Endothelial cell of umbilical vein (primary cell): ENCODE measurements at regions of chr18 and their contacts with region 1.

Region 1: GRCh38 chr18:812376-813171 is 532 bp upstream of the YES1 start:
- DNase-seq: peak; percentile 88
- H3K4me3 ChIP-seq: peak overlapping the region; percentile 80 to 100 (median 99)
- H3K27ac ChIP-seq: peak overlapping the region; percentile 90
- H3K4me1 ChIP-seq: peaks cover 49% of the 10 kb centered on the region
- H3K27me3 ChIP-seq: no peaks in the 10 kb centered on the region
- CTCF ChIP-seq: no peak
- POLR2A ChIP-seq: no peak

Region 2: GRCh38 chr18:731185-731584 is 81.4 kb before region 1 on chr18:
- CTCF ChIA-PET with region 1: no interaction called
- POLR2A ChIA-PET with region 1: interaction called, 11 read pairs
- dilution Hi-C with region 1: no loop called
- intact Hi-C with region 1: no loop called
- DNase-seq: no peak
- H3K4me3 ChIP-seq: no peak overlapping the region
- H3K27ac ChIP-seq: no peak overlapping the region
- H3K4me1 ChIP-seq: no peaks in the 10 kb centered on the region
- H3K27me3 ChIP-seq: no peaks in the 10 kb centered on the region
- CTCF ChIP-seq: no peak
- POLR2A ChIP-seq: no peak

Region 3: DNA sequence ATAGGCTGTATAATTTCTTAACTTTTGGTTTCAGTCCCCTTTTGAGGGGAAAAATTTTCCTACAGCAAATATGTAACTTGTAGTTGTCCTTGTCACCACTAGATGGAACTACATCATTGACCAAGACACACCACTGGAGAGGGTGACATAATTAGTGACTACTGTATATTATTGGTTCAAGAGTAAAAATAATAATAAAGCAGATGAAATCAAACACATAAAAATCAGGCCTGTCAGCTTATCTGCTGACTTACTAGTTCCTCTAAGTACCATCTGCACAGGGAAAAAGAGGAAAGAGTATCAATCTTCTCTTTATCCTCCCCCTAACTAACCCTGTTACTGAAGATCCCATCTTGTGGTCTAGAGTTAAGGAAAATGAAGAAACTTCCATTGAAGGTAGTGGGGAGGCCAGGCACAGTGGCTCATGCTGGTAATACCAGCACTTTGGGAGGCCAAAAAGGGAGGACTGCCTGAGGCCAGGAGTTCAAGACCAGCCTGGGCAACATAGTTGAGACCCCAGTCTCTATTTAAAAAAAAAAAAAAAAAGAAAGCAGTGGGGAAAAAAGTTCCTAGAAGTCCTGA is 70.6 kb before region 1 on chr18:
- CTCF ChIA-PET with region 1: interaction called, 13 read pairs
- POLR2A ChIA-PET with region 1: no interaction called
- dilution Hi-C with region 1: no loop called
- intact Hi-C with region 1: loop called (anchors 1 kb)
- DNase-seq: peak; percentile 78
- H3K4me3 ChIP-seq: no peak overlapping the region
- H3K27ac ChIP-seq: peak overlapping the region; percentile 9
- H3K4me1 ChIP-seq: peaks cover 19% of the 10 kb centered on the region
- H3K27me3 ChIP-seq: no peaks in the 10 kb centered on the region
- CTCF ChIP-seq: peak; percentile 46 to 51
- POLR2A ChIP-seq: no peak

Region 4: GRCh38 chr18:778194-778927 is 34.2 kb before region 1 on chr18:
- CTCF ChIA-PET with region 1: interaction called, 6 read pairs
- POLR2A ChIA-PET with region 1: no interaction called
- dilution Hi-C with region 1: no loop called
- intact Hi-C with region 1: loop called (anchors 2 kb)
- DNase-seq: peak; percentile 76
- H3K4me3 ChIP-seq: peak overlapping the region in 1 of 3 experiments; percentile 13
- H3K27ac ChIP-seq: peak overlapping the region; percentile 10
- H3K4me1 ChIP-seq: peaks cover 41% of the 10 kb centered on the region
- H3K27me3 ChIP-seq: no peaks in the 10 kb centered on the region
- CTCF ChIP-seq: no peak
- POLR2A ChIP-seq: no peak

Region 5: GRCh38 chr18:824179-824578 is 11.6 kb after region 1 on chr18:
- CTCF ChIA-PET with region 1: interaction called, 138 read pairs
- POLR2A ChIA-PET with region 1: no interaction called
- dilution Hi-C with region 1: no loop called
- intact Hi-C with region 1: no loop called
- DNase-seq: no peak
- H3K4me3 ChIP-seq: no peak overlapping the region
- H3K27ac ChIP-seq: no peak overlapping the region
- H3K4me1 ChIP-seq: peaks cover 9% of the 10 kb centered on the region
- H3K27me3 ChIP-seq: no peaks in the 10 kb centered on the region
- CTCF ChIP-seq: no peak
- POLR2A ChIP-seq: no peak